ENCODE measurements at regions of chr18 and their contacts with region 1.

Region 1: GRCh38 chr18:13558124-13558523 is 168.2 kb downstream of the FAM210A start:
- DNase-seq: peak; percentile 34 to 62
- H3K4me3 ChIP-seq: no peak overlapping the region
- H3K27ac ChIP-seq: no peak overlapping the region
- H3K4me1 ChIP-seq: no peaks in the 10 kb centered on the region
- H3K27me3 ChIP-seq: no peaks in the 10 kb centered on the region
- CTCF ChIP-seq: peak; percentile 51 to 84 (median 63)
- EP300 ChIP-seq: no peak
- POLR2A ChIP-seq: no peak
- RAD21 ChIP-seq: peak; percentile 85 to 89

Region 2: DNA sequence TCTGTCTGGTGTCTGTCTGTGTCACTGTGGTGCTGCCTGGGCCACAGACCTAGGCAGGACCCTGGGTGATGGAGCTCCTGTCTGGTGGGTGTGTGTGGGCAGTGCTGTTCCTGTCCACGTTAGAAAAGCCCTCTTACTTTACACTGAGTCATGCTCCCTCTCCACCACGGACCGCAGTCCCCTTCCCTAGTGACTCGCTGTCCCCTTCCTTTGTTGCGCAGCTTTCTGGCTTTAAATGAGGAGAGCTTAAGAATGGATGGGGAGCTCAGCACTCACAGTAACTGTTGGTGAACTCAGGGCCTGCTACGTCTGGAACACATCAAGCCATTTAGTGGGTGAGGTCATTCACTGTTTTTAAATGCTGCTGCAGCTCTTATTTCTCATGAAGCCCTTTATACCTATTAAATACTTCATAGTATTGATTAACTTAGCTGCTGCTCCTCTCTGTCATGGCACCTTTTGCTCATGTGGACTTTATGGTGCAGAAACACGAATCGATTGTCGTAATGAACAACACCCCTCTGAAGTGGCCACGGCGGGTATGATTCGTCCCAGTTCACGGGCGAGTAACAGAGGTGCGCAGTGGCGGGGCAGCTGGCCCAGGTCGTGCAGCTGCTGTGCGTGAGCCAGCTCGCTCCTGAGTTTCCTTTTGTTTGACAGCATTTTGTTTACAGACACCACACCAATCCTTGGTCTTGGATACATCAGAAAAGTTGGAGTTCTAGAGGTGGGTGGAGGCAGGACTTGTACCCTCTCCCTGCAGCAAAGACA is 239.2 kb before region 1 on chr18:
- CTCF ChIA-PET with region 1: no interaction called
- POLR2A ChIA-PET with region 1: no interaction called
- DNase-seq: no peak
- H3K4me3 ChIP-seq: no peak overlapping the region
- H3K27ac ChIP-seq: no peak overlapping the region
- H3K4me1 ChIP-seq: no peaks in the 10 kb centered on the region
- H3K27me3 ChIP-seq: no peaks in the 10 kb centered on the region
- CTCF ChIP-seq: no peak
- EP300 ChIP-seq: no peak
- POLR2A ChIP-seq: no peak
- RAD21 ChIP-seq: no peak

Region 3: GRCh38 chr18:13621886-13622619 is 63.9 kb after region 1 on chr18:
- CTCF ChIA-PET with region 1: interaction called, 14 read pairs
- POLR2A ChIA-PET with region 1: no interaction called
- DNase-seq: no peak
- H3K4me3 ChIP-seq: no peak overlapping the region
- H3K27ac ChIP-seq: no peak overlapping the region
- H3K4me1 ChIP-seq: no peaks in the 10 kb centered on the region
- H3K27me3 ChIP-seq: no peaks in the 10 kb centered on the region
- CTCF ChIP-seq: no peak
- EP300 ChIP-seq: no peak
- POLR2A ChIP-seq: no peak
- RAD21 ChIP-seq: no peak

Region 4: DNA sequence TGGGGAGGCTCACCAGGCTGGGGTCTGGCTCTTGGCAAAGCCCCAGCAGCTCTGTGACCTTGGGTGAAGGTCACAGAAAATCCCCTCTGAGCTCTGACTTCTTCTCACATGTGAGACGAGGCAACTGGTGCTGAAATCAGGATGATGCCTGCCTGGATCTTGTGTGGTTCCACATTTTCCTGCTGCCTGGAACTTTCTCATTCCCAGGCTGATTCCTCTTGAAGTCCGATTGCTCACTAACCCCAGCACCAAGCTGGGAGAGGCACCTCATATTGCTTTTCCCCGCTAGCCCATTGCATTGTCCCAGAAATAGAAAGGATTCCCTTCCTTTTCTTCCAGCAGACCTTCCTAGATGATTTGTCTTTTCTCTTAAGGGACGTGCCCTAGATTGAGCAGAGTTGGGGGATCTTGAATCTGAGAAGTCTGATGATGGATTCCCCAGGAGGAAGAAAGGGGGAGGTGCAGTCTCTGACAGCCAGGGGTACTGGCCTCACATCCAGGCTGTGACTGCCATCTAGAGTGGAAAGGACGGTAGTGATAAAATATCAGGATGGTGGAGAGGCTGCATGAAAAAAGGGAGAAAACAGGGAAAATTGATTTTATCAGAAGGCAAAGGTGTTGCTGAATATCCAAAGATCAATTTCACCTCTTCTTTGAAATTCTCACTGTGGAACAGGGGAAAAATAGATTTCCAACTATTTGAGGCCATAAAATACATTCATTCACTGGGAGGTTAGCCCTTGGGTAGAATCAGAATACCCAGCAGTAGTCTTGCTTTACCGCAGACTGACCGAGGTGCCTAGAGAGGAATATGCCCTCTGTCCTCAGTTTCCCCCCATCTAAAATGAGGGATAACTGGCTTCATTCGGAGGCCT is 72.0 kb after region 1 on chr18:
- CTCF ChIA-PET with region 1: interaction called, 47 read pairs
- POLR2A ChIA-PET with region 1: no interaction called
- DNase-seq: no peak
- H3K4me3 ChIP-seq: no peak overlapping the region
- H3K27ac ChIP-seq: no peak overlapping the region; the same call in 1 of the 2 replicates
- H3K4me1 ChIP-seq: peaks cover 0 to 5% (median 4%) of the 10 kb centered on the region in 4 experiments; a peak in 4 of 7 replicates
- H3K27me3 ChIP-seq: no peaks in the 10 kb centered on the region
- CTCF ChIP-seq: peak in 2 of 3 experiments; percentile 87 to 97; a peak in 3 of 4 replicates
- EP300 ChIP-seq: no peak
- POLR2A ChIP-seq: no peak
- RAD21 ChIP-seq: peak; percentile 97 to 98

Measured in H1 (cell line).